Activated CD4-positive, alpha-beta memory T cell treated with anti-CD3 and anti-CD28 coated beads, Interleukin-2, amount 10 ng/mL, durations not matched to agents 7 days and 5 days (primary cell): ENCODE measurements at regions of chr1 and their contacts with region 1.

Region 1: GRCh38 chr1:154335025-154335714 is 9.8 kb downstream of the ATP8B2 start:
- DNase-seq: peak; percentile 93
- H3K4me3 Mint-ChIP-seq: peak overlapping the region; percentile 43
- H3K27ac Mint-ChIP-seq: peak overlapping the region; percentile 81
- H3K4me1 Mint-ChIP-seq: peaks cover 89% of the 10 kb centered on the region
- H3K27me3 Mint-ChIP-seq: no peaks in the 10 kb centered on the region

Region 2: GRCh38 chr1:154129391-154129970 is 205.7 kb before region 1 on chr1:
- CTCF ChIA-PET with region 1: no interaction called
- POLR2A ChIA-PET with region 1: no interaction called
- DNase-seq: no peak
- H3K4me3 Mint-ChIP-seq: no peak overlapping the region
- H3K27ac Mint-ChIP-seq: no peak overlapping the region
- H3K4me1 Mint-ChIP-seq: peaks cover 9% of the 10 kb centered on the region
- H3K27me3 Mint-ChIP-seq: no peaks in the 10 kb centered on the region

Region 3: DNA sequence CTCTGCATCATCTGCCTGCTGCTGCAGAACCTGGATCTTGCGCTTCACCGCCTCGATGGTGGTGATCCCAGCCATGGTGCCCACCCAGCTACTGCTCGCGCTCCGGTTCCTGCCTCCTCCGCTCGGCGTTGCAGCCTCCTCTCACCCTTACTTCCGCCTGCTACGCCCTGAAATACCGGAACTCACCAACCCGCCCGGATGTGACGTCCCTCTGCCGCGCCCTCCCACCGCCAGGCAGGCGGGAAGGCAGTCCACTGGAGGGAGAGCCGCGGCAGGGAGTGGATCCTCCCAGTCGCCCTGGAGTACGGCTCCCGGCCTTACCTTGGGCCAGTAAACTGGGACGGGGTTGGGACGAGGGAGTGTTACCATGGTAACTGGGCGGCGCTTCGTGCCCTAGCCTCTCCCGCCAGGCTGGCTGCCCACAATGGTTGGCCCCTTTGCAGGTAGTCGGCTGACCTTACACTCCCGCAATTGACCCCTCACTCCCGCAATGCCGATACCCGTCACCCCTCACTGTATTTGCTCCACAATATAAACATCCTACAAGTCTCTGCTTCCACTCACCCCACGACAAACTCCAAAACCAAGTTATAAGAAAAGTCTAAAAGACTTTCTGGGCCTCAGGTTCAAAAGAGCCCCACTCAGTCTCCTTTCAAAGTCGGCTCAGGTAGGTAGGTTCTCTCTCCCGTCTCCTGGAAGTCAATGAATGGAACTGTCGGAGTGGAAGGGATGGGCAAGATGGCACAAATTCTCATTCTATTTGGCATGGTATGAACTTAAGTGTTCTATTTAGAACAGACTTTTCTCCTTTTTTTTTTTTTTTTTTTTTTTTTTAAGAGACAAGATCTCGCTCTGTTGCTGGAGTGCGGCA is 151.9 kb before region 1 on chr1:
- CTCF ChIA-PET with region 1: interaction called, 19 read pairs
- POLR2A ChIA-PET with region 1: interaction called, 7 read pairs
- DNase-seq: peak; percentile 96
- H3K4me3 Mint-ChIP-seq: peak overlapping the region; percentile 99
- H3K27ac Mint-ChIP-seq: peak overlapping the region; percentile 99
- H3K4me1 Mint-ChIP-seq: peaks cover 45% of the 10 kb centered on the region
- H3K27me3 Mint-ChIP-seq: no peaks in the 10 kb centered on the region

Region 4: DNA sequence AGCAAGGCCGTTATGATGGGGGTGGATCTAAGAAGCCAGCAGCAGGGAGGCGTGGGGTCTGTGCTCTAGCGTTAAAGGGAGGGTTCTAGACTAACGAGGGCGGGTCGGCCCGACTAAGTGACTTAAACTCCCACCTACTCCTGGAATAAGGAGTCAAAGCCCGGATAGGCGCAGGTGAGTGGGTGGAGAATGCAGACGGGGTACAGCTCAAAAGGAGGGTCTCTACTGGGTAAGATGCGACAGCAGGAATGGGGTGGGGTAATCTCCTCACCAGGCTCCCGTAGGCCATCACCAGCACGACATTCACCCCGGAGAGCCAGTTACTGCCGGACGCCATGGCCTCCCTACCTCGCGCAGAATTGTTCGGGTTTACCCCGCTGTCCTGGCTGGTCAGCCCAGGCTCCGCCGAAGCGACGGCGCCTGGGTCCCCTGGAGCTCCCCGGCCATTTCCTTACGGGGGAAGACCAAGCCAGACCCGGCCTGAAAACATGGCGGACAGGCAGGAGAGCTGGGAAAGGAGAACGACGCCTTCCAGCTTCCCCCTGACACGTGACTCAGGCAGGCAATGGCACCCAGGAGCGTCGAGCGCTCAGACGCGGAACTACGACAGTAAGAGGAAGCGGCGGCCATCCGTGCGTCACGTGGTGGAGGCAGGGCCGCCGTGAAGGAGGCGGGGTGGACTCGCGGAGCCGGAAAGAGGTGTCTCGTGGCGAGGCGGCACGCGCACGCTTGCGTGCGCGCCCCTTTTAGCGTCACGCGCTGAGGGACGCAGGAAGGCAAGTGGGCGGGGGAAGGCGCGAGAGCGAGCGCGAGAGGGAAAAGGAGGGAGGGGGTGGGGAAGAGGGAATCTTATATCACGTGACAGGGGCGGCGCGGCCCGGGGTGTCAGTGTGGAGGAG is 114.8 kb before region 1 on chr1 and contains the start of gene UBAP2L:
- CTCF ChIA-PET with region 1: interaction called, 11 read pairs
- POLR2A ChIA-PET with region 1: interaction called, 5 read pairs
- DNase-seq: peak; percentile 99
- H3K4me3 Mint-ChIP-seq: peak within 1 kb of the TSS; percentile 92
- H3K27ac Mint-ChIP-seq: peak within 1 kb of the TSS; percentile 97
- H3K4me1 Mint-ChIP-seq: peaks cover 71% of the 10 kb centered on the region
- H3K27me3 Mint-ChIP-seq: no peaks in the 10 kb centered on the region
- total RNA-seq, gene UBAP2L: 155 to 157 TPM

Region 5: DNA sequence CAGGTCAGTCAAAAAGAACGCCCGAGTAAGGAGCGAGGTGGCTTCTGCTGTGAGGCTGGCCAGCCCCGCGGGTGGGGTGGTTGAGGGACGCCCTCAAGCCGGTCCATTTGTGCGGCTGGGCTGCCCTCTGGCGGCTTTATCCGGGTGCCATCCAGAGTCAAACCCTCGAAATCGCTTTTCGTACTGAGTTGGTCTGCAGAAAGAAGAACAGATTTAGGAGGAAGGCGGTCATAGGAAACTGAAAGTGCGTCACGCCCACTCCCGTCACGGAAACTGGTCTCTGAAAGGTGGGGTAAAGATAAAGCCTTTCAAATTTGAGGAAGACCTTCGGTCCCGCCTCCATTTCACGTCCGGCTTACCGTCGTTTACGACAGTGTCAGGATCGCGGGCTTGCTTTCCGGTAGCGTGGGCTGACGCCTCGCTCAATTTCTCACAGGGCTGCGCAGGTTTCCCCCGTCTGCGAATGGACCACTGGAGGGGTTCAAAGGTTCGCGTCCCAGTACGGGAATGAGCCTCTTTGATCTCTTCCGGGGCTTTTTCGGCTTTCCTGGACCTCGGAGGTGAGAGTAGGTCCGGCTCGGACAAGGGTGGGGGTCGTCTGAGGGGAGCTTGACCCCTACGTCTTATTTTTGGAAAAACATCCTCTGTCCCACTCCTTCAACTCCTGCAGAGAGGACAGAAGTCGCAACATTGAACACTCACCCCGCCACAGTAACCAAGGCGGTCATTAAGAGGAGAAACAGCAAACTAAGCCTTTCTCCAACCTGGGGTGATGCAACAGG is 62.8 kb before region 1 on chr1 and contains the start of gene HAX1:
- CTCF ChIA-PET with region 1: interaction called, 44 read pairs
- POLR2A ChIA-PET with region 1: interaction called, 34 read pairs
- DNase-seq: peak; percentile 98
- H3K4me3 Mint-ChIP-seq: peak within 1 kb of the TSS; percentile 91
- H3K27ac Mint-ChIP-seq: peak within 1 kb of the TSS; percentile 94
- H3K4me1 Mint-ChIP-seq: peaks cover 43% of the 10 kb centered on the region
- H3K27me3 Mint-ChIP-seq: no peaks in the 10 kb centered on the region
- total RNA-seq, gene HAX1: 141 to 142 TPM

Region 6: GRCh38 chr1:154324669-154325582 is 10.2 kb before region 1 on chr1 and contains the start of gene ATP8B2:
- CTCF ChIA-PET with region 1: interaction called, 197 read pairs
- POLR2A ChIA-PET with region 1: interaction called, 71 read pairs
- DNase-seq: peak; percentile 85
- H3K4me3 Mint-ChIP-seq: peak within 1 kb of the TSS; percentile 86
- H3K27ac Mint-ChIP-seq: peak within 1 kb of the TSS; percentile 89
- H3K4me1 Mint-ChIP-seq: peaks cover 42% of the 10 kb centered on the region
- H3K27me3 Mint-ChIP-seq: peaks cover 17% of the 10 kb centered on the region
- total RNA-seq, gene ATP8B2: 142 to 149 TPM

Region 7: DNA sequence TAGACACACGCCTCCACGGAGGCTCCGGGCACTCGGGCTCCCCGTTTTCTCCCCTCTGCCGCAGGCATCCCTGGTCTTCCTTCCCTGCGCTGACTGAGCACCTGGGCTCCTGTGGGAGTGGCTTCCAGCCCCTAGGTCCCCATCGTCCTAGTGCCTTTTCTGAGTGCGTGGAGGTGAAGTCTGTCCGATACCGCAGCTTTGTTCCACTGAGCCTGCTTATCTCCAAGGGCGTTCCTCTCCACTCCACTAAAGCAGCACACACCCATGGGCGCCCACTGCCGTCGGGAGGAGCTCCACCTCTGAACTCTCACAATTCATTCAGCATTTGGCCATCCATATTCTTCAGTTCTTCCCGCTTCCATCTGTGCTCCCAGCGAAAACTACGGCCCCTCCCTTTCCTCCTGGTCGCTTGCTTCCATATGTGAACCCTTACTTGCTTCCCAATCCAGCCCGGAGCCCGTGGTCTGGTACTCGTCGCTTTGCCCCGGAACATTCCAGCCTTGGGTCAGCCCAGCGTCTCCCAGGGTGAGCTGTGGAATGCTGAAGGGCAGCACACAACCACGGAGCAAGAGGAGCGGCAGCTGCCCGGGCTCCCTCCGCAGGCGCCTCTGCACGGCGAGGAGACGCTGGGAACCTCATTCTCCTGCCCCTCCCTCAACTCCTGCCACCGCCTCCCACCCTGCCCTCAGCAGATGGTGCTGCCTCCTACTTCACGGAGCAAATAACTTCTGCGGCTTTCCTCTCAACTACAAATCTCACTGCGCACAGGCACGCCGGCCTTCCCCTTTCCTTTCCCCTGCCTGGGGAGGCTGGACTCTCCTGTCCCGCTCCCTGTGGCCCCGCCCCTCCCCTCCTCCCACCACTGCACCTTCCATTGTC is 17.6 kb after region 1 on chr1:
- CTCF ChIA-PET with region 1: interaction called, 138 read pairs
- POLR2A ChIA-PET with region 1: interaction called, 5 read pairs
- DNase-seq: peak; percentile 46
- H3K4me3 Mint-ChIP-seq: peak overlapping the region; percentile 53
- H3K27ac Mint-ChIP-seq: peak overlapping the region; percentile 62
- H3K4me1 Mint-ChIP-seq: peaks cover 38% of the 10 kb centered on the region
- H3K27me3 Mint-ChIP-seq: peaks cover 2% of the 10 kb centered on the region

Region 8: DNA sequence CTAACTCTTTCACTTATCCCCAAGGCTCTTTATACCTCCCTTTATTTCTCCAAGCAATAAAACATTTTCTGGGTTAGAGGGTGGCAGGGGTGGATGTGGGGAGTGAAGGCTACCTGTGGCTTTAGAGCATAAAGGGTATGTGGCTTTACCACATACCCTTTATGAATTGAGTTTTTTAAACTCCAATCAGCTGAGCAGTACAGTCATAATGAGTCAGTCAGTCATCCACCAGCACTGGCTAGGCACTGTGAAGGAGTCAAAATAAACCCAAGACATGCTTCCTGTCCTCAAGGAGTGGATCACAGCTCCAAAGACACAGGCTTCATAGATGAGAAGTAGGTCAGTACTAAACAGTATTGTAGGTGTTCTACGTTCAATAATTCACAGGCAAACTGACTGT is 164.3 kb after region 1 on chr1:
- CTCF ChIA-PET with region 1: no interaction called
- POLR2A ChIA-PET with region 1: no interaction called
- DNase-seq: no peak
- H3K4me3 Mint-ChIP-seq: no peak overlapping the region
- H3K27ac Mint-ChIP-seq: no peak overlapping the region
- H3K4me1 Mint-ChIP-seq: peaks cover 22% of the 10 kb centered on the region
- H3K27me3 Mint-ChIP-seq: peaks cover 42% of the 10 kb centered on the region

Region 9: DNA sequence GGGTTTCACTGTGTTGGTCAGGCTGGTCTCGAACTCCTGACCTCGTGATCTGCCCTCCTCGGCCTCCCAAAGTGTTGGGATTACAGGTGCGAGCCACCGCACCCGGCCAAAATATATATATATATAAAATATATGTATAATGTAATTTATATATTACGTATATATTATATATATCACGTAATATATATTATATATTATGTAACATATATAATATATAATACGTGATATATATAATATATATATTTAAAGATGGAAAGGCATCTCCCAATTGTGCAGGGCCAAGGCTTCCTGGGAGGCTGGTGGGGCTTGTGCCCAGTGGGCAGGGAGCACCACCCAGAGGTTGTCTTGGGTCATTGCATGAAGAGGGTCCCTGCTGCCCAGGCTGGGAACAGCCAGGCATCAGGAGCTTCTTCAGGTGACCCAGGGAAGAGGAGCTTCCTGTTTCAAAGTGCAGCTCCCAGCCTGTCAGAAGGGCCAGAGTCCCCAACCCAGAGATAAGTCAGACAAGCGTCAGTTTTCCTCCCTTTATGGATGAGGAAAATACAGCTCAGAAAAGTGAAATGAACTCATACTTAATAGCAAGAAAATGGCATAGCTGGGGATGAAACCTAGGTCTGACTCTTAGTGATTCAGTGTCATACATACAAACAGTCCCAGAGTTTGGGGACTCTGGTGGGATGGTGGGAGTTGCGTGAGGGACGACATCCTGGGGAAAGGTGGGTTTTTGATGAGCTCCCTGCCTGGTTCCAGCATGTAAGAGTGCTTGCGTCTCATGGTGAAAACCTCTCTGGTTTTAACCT is 211.3 kb after region 1 on chr1:
- CTCF ChIA-PET with region 1: interaction called, 13 read pairs
- POLR2A ChIA-PET with region 1: no interaction called
- DNase-seq: peak; percentile 58
- H3K4me3 Mint-ChIP-seq: no peak overlapping the region
- H3K27ac Mint-ChIP-seq: no peak overlapping the region
- H3K4me1 Mint-ChIP-seq: peaks cover 12% of the 10 kb centered on the region
- H3K27me3 Mint-ChIP-seq: peaks cover 4% of the 10 kb centered on the region